HepG2 (cell line): ENCODE measurements at regions of chr19 and their contacts with region 1.

Region 1: GRCh38 chr19:57746580-57747471 is at the start of gene ZNF776:
- DNase-seq: peak; percentile 88
- ATAC-seq: peak; percentile 99
- H3K4me3 ChIP-seq: peak within 1 kb of the TSS; percentile 87 to 100 (median 99)
- H3K27ac ChIP-seq: peak within 1 kb of the TSS; percentile 89
- H3K4me1 ChIP-seq: peaks cover 33% of the 10 kb centered on the region
- H3K27me3 ChIP-seq: no peaks in the 10 kb centered on the region; a peak in 1 of 5 replicates
- CTCF ChIP-seq: peak; percentile 18; the same call in 1 of the 2 replicates
- EP300 ChIP-seq: no peak
- POLR2A ChIP-seq: peak; percentile 73 to 86; a peak in 3 of 4 replicates
- RAD21 ChIP-seq: no peak; the same call in 1 of the 2 replicates
- total RNA-seq, gene ZNF776: 15.6 and 16.9 TPM in 2 replicates

Region 2: DNA sequence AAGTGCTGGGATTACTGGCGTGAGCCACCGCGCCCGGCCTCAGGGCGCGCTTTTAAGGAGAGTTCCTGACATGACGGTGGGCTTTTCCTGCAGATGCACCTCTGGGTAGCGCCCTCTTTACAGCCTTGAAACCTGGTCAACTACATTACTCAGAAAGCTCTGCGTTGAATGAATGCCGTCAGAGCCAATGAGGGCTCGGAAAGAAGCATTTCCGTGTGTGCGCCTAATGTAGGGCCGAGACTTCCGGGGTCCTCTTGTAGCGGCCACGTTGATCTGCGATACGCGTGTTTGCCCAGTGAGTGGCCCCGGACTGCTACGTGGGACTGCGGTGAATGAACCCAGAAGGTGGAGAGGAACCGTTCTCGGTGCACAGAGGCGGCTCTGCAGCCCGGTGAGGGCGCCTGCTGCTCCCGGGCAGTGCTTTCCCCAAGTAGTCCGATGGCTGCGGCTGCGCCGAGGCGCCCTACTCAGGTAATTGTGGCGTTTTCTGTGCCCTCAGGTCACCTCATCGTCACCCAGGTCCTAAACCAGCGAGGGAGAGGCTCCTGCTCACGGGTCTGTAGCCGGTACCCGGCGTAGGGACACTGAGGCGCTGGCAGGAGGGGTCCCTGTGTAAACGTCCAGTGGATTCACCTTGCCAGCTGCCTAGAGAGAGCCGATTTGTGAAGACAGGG is 72.8 kb after region 1 on chr19:
- CTCF ChIA-PET with region 1: no interaction called
- POLR2A ChIA-PET with region 1: interaction called, 13 read pairs
- in situ Hi-C with region 1: no loop called
- intact Hi-C with region 1: loop called (anchors 2 kb)
- DNase-seq: peak; percentile 97
- ATAC-seq: peak; percentile 86
- H3K4me3 ChIP-seq: peak overlapping the region; percentile 86 to 96 (median 88)
- H3K27ac ChIP-seq: peak overlapping the region; percentile 90
- H3K4me1 ChIP-seq: peaks cover 62% of the 10 kb centered on the region
- H3K27me3 ChIP-seq: no peaks in the 10 kb centered on the region; a peak in 1 of 5 replicates
- CTCF ChIP-seq: peak; percentile 66
- EP300 ChIP-seq: no peak
- POLR2A ChIP-seq: peak; percentile 92 to 94
- RAD21 ChIP-seq: no peak; the same call in 1 of the 2 replicates